ENCODE measurements at regions of chr1 and their contacts with region 1.

Region 1: DNA sequence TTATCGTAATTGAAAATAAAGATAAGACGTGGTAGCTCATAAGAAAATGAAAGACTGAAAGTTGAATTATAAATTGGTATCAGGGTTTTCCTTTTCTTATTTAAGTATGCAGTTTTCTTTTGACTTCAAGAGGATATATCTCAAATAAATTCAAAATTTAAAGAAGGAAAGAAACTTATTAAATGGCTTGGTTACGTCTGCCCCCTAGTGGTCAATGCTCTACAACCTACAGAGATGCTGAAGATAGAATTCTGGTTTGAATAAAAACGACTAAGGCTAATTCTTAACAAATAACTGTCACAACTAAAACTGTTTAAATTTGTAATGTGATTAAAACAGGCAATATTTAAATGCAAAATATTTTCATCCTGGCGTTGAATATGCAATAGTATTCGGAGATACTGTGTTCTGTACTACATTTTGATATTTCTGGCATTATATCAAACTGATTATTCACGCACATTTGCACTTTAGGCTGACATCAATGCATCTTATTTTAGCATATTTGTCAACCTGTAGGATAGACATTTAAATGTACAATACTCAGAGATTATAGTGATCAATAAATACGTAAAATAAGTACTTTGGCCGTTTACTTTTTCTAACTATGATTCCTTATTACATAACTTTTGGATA is 26.8 kb downstream of the IFI44 start:
- DNase-seq: peak; percentile 81
- ATAC-seq: peak; percentile 74
- H3K4me3 ChIP-seq: no peak overlapping the region
- H3K27ac ChIP-seq: no peak overlapping the region
- H3K4me1 ChIP-seq: no peaks in the 10 kb centered on the region
- H3K27me3 ChIP-seq: no peaks in the 10 kb centered on the region
- CTCF ChIP-seq: peak; percentile 92

Region 2: DNA sequence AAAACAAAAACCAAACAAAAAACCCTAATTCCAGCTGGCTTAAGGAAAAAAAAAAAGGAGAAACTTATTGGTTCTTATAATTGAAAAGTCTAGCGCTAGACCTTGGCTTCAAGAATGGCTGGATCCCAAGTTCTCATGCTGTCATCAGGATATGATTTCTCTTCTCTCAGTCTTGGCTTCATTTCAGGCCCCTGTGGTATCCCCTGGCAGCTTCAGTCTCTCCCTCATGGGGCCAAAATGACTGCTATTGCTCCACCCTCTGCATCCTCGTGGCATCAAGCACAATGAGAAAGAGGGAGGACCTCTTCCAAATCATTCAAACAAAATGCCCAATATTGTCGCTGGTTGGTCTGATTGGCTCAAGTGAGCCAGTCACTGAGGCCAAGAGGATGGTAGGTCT is 550.0 kb before region 1 on chr1:
- CTCF ChIA-PET with region 1: interaction called, 3 read pairs
- POLR2A ChIA-PET with region 1: no interaction called
- intact Hi-C with region 1: loop called (anchors 1 kb)
- DNase-seq: no peak
- ATAC-seq: no peak
- H3K4me3 ChIP-seq: no peak overlapping the region
- H3K27ac ChIP-seq: no peak overlapping the region
- H3K4me1 ChIP-seq: peaks cover 6% of the 10 kb centered on the region
- H3K27me3 ChIP-seq: no peaks in the 10 kb centered on the region
- CTCF ChIP-seq: no peak

Region 3: DNA sequence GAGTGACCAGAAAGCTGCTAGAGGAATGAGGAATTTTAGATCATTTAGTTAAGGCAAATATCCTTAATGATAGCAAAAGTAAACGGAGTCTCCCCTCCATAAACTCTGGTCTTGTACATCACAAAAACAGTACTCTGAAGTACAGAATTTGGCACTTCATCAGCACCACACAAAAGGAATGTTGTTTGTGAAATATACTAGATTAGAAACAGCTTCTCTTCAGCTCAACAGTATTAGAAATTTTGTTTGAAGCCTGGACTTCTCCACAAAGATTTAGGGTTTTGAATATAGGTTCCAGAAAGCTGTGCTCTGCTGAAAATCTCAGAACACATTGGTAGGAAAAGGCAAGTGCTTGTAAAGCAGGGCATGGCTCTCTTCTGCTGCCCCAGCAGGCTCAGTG is 320.8 kb before region 1 on chr1:
- CTCF ChIA-PET with region 1: no interaction called
- POLR2A ChIA-PET with region 1: no interaction called
- intact Hi-C with region 1: loop called (anchors 5 kb)
- DNase-seq: no peak
- ATAC-seq: no peak
- H3K4me3 ChIP-seq: no peak overlapping the region
- H3K27ac ChIP-seq: no peak overlapping the region
- H3K4me1 ChIP-seq: peaks cover 16% of the 10 kb centered on the region
- H3K27me3 ChIP-seq: no peaks in the 10 kb centered on the region
- CTCF ChIP-seq: no peak

Region 4: DNA sequence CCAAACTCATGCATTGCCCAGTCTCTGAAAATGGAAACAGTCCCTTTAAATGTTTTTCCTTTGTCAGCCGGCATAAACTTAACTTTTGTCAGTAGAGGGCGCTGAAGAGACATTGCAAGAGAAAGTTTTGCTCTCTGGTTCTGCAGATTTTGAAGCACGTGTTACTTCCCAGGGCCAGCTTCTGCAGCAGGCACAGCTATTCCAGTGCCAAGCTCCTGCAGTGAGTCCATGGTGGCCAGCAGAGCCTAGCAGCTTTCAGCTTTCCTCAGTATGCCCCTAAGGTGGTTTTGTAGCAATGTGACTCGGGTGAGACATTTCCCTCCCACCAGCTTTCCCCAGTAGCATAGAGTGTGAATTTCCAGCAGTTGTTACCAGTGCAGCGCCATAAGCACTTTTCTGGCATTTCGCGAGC is 58.8 kb before region 1 on chr1:
- CTCF ChIA-PET with region 1: interaction called, 5 read pairs
- POLR2A ChIA-PET with region 1: no interaction called
- intact Hi-C with region 1: loop called (anchors 1 kb)
- DNase-seq: peak; percentile 91
- ATAC-seq: peak; percentile 59
- H3K4me3 ChIP-seq: no peak overlapping the region
- H3K27ac ChIP-seq: no peak overlapping the region
- H3K4me1 ChIP-seq: peaks cover 24% of the 10 kb centered on the region
- H3K27me3 ChIP-seq: no peaks in the 10 kb centered on the region
- CTCF ChIP-seq: peak; percentile 90

Region 5: GRCh38 chr1:78792756-78793155 is 116.3 kb after region 1 on chr1:
- CTCF ChIA-PET with region 1: no interaction called
- POLR2A ChIA-PET with region 1: no interaction called
- intact Hi-C with region 1: no loop called
- DNase-seq: no peak
- ATAC-seq: no peak
- H3K4me3 ChIP-seq: no peak overlapping the region
- H3K27ac ChIP-seq: no peak overlapping the region
- H3K4me1 ChIP-seq: no peaks in the 10 kb centered on the region
- H3K27me3 ChIP-seq: no peaks in the 10 kb centered on the region
- CTCF ChIP-seq: no peak

Region 6: DNA sequence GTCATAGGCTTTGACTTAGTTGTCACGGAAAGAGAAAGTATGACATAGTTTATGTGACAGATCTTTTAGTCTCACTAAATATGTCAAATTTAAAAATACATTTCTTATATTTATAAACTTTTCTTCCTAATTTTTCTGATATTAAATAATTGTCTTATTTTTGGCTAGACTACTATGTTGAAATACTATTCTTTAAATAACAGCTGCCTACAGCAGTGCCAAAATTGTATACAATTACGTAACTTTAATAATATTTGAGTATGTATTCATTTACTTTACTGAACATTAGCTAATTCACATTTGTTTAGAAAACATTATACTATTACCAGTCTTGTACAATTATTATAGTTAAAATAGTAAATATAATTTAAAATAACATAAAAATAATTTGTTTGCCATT is 192.7 kb after region 1 on chr1:
- CTCF ChIA-PET with region 1: no interaction called
- POLR2A ChIA-PET with region 1: no interaction called
- intact Hi-C with region 1: no loop called
- DNase-seq: no peak
- ATAC-seq: no peak
- H3K4me3 ChIP-seq: no peak overlapping the region
- H3K27ac ChIP-seq: no peak overlapping the region
- H3K4me1 ChIP-seq: no peaks in the 10 kb centered on the region
- H3K27me3 ChIP-seq: no peaks in the 10 kb centered on the region
- CTCF ChIP-seq: no peak

Region 7: GRCh38 chr1:79006564-79006963 is 330.1 kb after region 1 on chr1 and contains the start of gene ADGRL4:
- CTCF ChIA-PET with region 1: no interaction called
- POLR2A ChIA-PET with region 1: no interaction called
- intact Hi-C with region 1: no loop called
- DNase-seq: no peak
- ATAC-seq: no peak
- H3K4me3 ChIP-seq: no peak within 1 kb of the TSS
- H3K27ac ChIP-seq: no peak within 1 kb of the TSS
- H3K4me1 ChIP-seq: no peaks in the 10 kb centered on the region
- H3K27me3 ChIP-seq: no peaks in the 10 kb centered on the region
- CTCF ChIP-seq: no peak
- total RNA-seq, gene ADGRL4: not detected in 2 replicates